Right ventricle myocardium inferior (tissue), 1 donor: ENCODE measurements at regions of chr11 and their contacts with region 1.

Region 1: DNA sequence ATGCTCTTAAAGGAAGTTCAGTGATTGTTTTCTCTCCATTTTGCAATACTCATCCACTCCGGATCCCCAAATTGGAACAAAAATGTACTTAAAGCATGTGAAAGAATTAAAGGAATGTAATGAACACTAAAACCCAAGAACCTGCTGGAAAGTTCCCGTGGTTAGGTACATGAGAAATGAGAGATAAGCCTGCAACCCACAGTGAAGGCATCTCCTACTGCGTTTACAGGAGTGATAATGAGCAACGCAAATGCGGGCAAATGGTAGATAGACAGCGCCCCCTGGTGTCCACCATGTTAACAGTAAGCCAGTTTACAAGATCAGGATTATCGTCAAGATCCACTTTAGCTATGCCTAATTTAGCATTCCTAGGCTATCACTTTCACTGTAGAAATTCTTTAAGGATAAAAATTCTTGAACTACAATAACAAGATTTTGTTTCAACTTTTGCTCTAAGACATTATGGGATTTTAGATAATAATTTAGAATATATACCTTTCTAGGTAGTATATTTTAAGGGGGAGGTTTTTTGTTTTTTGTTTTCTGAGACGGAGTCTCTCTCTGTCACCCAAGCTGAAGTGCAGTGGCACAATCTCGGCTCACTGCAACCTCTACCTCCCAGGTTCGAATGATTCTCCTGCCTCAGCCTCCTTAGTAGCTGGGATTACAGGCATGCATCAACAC is 29.9 kb downstream of the ALG9 start:
- DNase-seq: peak; percentile 91
- ATAC-seq: peak; percentile 88

Region 2: GRCh38 chr11:111454561-111455192 is 386.8 kb before region 1 on chr11:
- intact Hi-C with region 1: loop called (anchors 10 kb)
- DNase-seq: no peak
- ATAC-seq: peak; percentile 23

Region 3: DNA sequence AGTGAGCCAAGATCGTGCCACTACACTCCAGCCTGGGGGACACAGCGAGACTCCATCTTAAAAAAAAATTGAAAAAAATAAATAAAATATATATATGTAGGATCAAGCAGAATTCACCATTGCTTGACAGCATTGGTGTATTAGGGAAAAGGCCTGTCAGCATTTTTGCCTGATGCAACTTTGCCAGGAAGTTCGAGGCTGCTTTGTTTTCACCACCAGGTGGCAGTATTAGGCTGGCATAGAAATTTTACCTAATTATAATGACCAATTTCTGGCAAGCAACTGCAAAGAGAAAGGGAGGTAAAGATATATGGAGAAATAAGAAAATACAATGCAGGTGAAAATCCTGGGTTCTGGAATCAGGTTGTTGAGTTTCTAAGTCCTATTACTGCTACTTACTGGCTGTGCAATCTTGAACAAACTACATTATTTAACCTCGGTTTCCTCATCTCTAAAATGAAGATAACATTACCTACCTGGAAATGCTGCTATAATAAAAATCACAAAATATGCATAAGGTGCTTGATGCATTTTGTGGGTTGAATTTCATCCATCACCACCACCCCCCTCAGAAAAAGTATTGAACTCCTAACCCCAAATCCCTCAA is 276.3 kb before region 1 on chr11:
- intact Hi-C with region 1: loop called (anchors 1 kb)
- DNase-seq: no peak
- ATAC-seq: peak; percentile 52

Region 4: GRCh38 chr11:111586388-111586831 is 255.1 kb before region 1 on chr11:
- intact Hi-C with region 1: loop called (anchors 5 kb)
- DNase-seq: no peak
- ATAC-seq: no peak

Region 5: GRCh38 chr11:111601979-111602864 is 239.3 kb before region 1 on chr11 and contains the start of gene SIK2:
- intact Hi-C with region 1: loop called (anchors 1 kb)
- DNase-seq: peak; percentile 97
- ATAC-seq: peak; percentile 97
- total RNA-seq, gene SIK2: 15.9 TPM

Region 6: DNA sequence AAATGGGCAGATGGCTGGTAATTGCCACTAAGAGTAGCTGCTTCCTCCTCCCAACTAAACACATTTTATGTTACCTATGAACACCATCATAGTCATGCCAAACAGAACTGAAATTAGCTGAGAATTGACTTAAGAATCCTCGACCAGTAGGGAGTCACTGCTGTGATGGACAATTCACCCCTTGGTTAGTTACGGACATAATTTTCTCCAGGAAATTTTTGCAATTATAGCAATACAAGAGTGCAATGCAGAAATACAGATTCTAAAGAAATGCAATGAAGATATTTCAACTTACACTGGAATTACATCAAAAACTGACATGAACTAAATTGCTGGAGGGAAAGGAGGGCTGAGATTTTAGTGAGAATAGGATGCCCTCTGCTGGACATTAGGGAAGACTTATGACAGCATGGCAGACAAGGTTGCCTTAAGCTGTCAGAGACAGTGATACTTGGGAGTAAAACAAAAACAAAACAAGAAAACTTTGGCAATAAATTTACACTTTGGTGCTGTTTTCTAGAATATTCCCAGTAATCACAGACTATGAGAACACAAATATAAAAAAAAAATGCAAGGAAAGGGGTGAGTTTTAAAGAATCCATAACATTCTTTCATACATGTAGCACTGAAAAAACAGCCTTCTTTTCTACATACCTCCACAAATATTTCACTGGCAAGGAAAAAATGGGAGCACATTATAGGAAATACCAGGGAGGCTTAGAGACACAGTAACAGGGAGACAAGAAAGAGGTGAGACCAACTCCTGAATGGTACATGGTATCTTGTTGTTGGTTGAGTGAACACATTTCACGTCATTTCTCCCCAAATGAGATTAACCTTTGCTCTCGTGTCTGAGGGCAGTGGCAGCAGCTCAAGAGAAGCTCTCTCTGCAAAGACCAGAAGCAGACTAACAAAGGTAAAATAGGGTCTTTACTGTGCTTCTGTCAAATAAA is 64.1 kb before region 1 on chr11:
- intact Hi-C with region 1: loop called (anchors 2 kb)
- DNase-seq: no peak
- ATAC-seq: peak; percentile 76